ENCODE measurements at regions of chr1 and their contacts with region 1.

Region 1: GRCh38 chr1:91511386-91511785 is 10.7 kb downstream of the CDC7 start:
- DNase-seq: no peak
- ATAC-seq: no peak
- H3K4me3 Mint-ChIP-seq: no peak overlapping the region
- H3K27ac Mint-ChIP-seq: no peak overlapping the region
- H3K4me1 Mint-ChIP-seq: peaks cover 2% of the 10 kb centered on the region
- H3K27me3 Mint-ChIP-seq: no peaks in the 10 kb centered on the region

Region 2: DNA sequence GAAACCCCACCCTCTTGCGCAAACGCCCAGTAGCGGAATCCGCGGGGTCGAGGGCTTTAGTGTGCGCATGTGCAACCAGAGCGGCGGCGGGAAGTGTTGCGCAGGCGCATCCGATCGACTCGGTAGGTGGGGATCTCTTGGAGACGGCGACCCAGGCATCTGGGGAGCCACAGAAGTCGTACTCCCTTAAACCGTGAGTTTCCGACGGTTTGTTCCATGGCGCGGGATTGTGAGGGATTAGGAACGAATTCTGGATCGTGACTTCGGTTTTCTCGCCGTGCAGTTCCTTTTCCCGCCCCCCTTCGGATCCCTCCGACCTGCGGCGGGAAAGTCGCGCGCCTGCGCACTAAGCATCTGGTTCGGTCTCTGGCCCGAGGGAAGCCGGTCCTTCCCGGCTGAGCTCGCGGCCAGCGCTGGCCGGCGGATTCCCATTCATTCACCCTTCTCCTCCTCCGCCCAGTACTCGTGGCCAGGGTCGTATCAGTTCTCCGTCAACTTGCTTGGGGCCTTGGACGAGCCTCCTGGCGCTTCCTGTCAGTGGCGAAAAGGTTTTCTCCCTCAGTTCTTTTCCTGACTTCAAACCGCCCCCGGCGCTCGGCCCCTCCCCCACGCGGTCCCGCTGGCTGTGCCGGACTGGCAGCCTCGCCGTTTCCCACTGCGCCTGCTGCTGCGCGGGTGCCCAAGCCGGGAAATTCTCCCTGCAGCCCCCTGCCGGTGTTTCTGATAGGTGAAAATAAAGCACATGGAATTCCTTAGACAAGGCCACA is 10.4 kb before region 1 on chr1 and contains the start of gene CDC7:
- CTCF ChIA-PET with region 1: interaction called, 17 read pairs
- POLR2A ChIA-PET with region 1: no interaction called
- DNase-seq: peak; percentile 90
- ATAC-seq: peak; percentile 88
- H3K4me3 Mint-ChIP-seq: no peak within 1 kb of the TSS
- H3K27ac Mint-ChIP-seq: no peak within 1 kb of the TSS
- H3K4me1 Mint-ChIP-seq: peaks cover 26% of the 10 kb centered on the region
- H3K27me3 Mint-ChIP-seq: no peaks in the 10 kb centered on the region
- total RNA-seq, gene CDC7: 26.5 to 27.7 TPM

Region 3: DNA sequence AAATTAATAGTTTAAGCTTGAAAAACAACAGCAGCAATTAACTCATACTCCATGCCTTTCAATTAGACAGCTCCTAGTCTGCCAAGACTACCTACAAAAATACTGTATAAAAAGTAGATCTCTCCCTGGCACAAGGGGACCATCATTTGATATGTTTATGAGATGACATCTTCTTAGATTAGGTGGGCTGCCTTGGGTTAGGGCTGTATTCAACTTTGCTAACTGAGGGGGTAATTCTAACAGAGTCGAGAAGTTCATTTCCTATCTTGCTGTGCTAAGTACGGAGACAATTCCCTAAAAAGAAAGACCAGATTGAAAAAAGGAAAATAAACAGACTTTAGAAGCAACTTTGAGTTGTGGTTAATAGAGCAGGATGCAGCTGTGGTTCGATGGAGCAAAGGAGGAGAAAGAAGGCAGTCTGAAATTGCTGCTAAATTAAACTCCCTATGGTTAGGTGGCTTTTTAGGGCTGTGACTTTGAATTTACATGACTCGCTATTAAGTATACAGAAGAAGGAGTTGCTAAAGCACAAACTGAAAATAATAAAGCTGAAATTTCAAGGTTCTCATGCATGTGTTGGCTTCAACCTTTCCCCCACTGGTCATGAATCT is 64.6 kb after region 1 on chr1:
- CTCF ChIA-PET with region 1: interaction called, 11 read pairs
- POLR2A ChIA-PET with region 1: no interaction called
- DNase-seq: no peak
- ATAC-seq: no peak
- H3K4me3 Mint-ChIP-seq: no peak overlapping the region
- H3K27ac Mint-ChIP-seq: peak overlapping the region; percentile 10
- H3K4me1 Mint-ChIP-seq: peaks cover 23% of the 10 kb centered on the region
- H3K27me3 Mint-ChIP-seq: peaks cover 10% of the 10 kb centered on the region

Region 4: GRCh38 chr1:91872560-91873081 is 361.2 kb after region 1 on chr1:
- CTCF ChIA-PET with region 1: interaction called, 15 read pairs
- POLR2A ChIA-PET with region 1: no interaction called
- DNase-seq: peak; percentile 56
- ATAC-seq: peak; percentile 35
- H3K4me3 Mint-ChIP-seq: no peak overlapping the region
- H3K27ac Mint-ChIP-seq: peak overlapping the region; percentile 26
- H3K4me1 Mint-ChIP-seq: peaks cover 50% of the 10 kb centered on the region
- H3K27me3 Mint-ChIP-seq: peaks cover 29% of the 10 kb centered on the region

Region 5: GRCh38 chr1:91924146-91924545 is 412.8 kb after region 1 on chr1:
- CTCF ChIA-PET with region 1: interaction called, 59 read pairs
- POLR2A ChIA-PET with region 1: no interaction called
- DNase-seq: no peak
- ATAC-seq: no peak
- H3K4me3 Mint-ChIP-seq: no peak overlapping the region
- H3K27ac Mint-ChIP-seq: no peak overlapping the region
- H3K4me1 Mint-ChIP-seq: peaks cover 8% of the 10 kb centered on the region
- H3K27me3 Mint-ChIP-seq: peaks cover 2% of the 10 kb centered on the region

Measured in activated CD8-positive, alpha-beta T cell treated with anti-CD3 and anti-CD28 coated beads, Interleukin-2, amount 10 ng/mL, durations not matched to agents 7 days and 5 days (primary cell).